Right ventricle myocardium superior (tissue), 1 donor: ENCODE measurements at regions of chr12 and their contacts with region 1.

Region 1: DNA sequence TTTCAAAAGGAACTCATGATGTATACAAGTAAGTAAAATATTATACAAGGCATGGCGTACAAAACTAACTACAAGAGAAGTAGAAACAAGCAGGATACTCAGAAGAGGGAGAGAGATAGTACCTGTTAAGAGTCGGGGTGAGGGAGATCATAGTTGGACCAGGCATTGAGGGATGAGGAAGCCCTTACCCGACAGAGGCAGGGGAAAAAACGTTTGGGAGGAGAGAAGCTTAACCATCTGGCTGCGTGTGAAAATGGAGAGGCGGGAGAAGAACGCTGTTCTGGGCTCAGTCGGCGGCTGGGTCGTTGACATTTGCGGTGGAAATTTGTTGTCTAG is 575 bp upstream of the FMNL3 start:
- DNase-seq: no peak
- ATAC-seq: no peak

Region 2: DNA sequence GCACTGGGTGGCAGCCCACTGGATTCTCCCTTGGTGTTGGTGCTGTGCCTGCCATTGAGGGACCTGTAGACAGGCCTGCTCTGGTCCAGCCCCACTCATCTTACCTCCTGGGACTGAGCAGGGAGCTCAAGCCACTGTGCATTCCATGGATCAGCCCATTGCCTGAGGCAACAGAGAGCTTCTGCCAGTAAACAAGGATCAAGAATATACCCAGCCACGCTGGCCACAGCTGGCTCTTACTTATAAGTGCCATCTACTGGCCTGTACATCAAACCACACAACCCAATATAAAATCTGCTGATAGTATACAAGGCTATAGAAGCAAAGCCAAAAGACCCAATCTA is 98.1 kb before region 1 on chr12:
- intact Hi-C with region 1: no loop called
- DNase-seq: no peak
- ATAC-seq: no peak

Region 3: DNA sequence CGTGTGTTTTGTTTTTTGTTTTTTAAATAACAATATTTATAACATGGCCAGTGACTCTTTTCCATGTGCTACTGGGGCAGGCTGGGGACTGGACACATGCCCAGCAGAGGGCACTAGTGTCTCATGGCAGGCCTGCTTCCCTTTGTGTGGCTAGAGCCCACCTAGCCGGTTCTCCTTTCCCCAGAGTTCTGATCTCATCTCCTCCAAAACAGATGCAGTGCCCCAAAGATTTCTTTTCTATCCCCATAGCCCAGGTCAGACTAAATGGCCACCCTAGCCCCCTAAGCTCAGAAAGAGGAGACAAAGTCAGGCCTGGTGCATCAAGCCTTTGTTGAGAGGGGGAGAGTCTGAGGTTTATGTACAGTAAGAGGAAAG is 63.2 kb before region 1 on chr12:
- intact Hi-C with region 1: loop called (anchors 1 kb)
- DNase-seq: peak; percentile 86
- ATAC-seq: peak; percentile 86

Region 4: GRCh38 chr12:50032639-50033581 is 325.1 kb after region 1 on chr12:
- intact Hi-C with region 1: no loop called
- DNase-seq: peak; percentile 47
- ATAC-seq: peak; percentile 77